HepG2 (cell line): ENCODE measurements at regions of chr17 and their contacts with region 1.

Region 1: GRCh38 chr17:11997147-11997846 is at the start of gene ZNF18:
- DNase-seq: peak; percentile 82
- ATAC-seq: peak; percentile 98
- H3K4me3 ChIP-seq: peak within 1 kb of the TSS; percentile 80 to 98 (median 80)
- H3K27ac ChIP-seq: peak within 1 kb of the TSS; percentile 80
- H3K4me1 ChIP-seq: peaks cover 15% of the 10 kb centered on the region
- H3K27me3 ChIP-seq: peaks cover 0 to 3% of the 10 kb centered on the region in 2 experiments; a peak in 1 of 5 replicates
- CTCF ChIP-seq: peak; percentile 26
- EP300 ChIP-seq: no peak
- POLR2A ChIP-seq: peak; percentile 97 to 98
- RAD21 ChIP-seq: peak; percentile 35; the same call in 1 of the 2 replicates
- total RNA-seq, gene ZNF18: 5.4 and 6.7 TPM in 2 replicates

Region 2: GRCh38 chr17:11671126-11671525 is 326.2 kb before region 1 on chr17:
- CTCF ChIA-PET with region 1: no interaction called
- POLR2A ChIA-PET with region 1: no interaction called
- in situ Hi-C with region 1: no loop called
- intact Hi-C with region 1: no loop called
- DNase-seq: no peak
- ATAC-seq: no peak
- H3K4me3 ChIP-seq: no peak overlapping the region
- H3K27ac ChIP-seq: no peak overlapping the region
- H3K4me1 ChIP-seq: no peaks in the 10 kb centered on the region
- H3K27me3 ChIP-seq: no peaks in the 10 kb centered on the region
- CTCF ChIP-seq: no peak
- EP300 ChIP-seq: no peak
- POLR2A ChIP-seq: no peak
- RAD21 ChIP-seq: no peak

Region 3: GRCh38 chr17:11885051-11885450 is 112.2 kb before region 1 on chr17:
- CTCF ChIA-PET with region 1: no interaction called
- POLR2A ChIA-PET with region 1: no interaction called
- in situ Hi-C with region 1: no loop called
- intact Hi-C with region 1: no loop called
- DNase-seq: no peak
- ATAC-seq: no peak
- H3K4me3 ChIP-seq: no peak overlapping the region
- H3K27ac ChIP-seq: no peak overlapping the region
- H3K4me1 ChIP-seq: no peaks in the 10 kb centered on the region
- H3K27me3 ChIP-seq: no peaks in the 10 kb centered on the region
- CTCF ChIP-seq: no peak
- EP300 ChIP-seq: no peak
- POLR2A ChIP-seq: no peak
- RAD21 ChIP-seq: no peak

Region 4: DNA sequence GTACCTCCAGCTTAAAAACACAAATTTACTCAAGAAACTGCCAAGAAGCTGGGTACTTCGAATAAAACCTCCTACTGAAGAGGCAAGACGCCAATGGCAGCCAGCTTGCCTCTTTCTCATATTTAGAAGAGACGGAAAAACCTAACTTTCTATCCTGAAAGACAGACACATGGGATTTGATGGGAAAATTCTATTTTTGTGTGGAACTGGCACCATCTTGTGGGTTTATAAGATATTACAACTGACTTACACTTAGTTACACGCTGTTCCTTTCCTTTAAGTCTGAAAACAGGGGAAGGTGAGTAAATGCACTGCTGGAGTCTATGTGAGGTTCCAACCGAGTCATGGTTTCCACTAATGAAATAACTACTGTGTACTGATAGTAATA is 10.4 kb before region 1 on chr17:
- CTCF ChIA-PET with region 1: no interaction called
- POLR2A ChIA-PET with region 1: interaction called, 13 read pairs
- in situ Hi-C with region 1: no loop called
- intact Hi-C with region 1: no loop called
- DNase-seq: peak; percentile 37
- ATAC-seq: peak; percentile 72
- H3K4me3 ChIP-seq: peak overlapping the region in 2 of 3 experiments; percentile 19 to 38; a peak in 2 of 6 replicates
- H3K27ac ChIP-seq: peak overlapping the region; percentile 64
- H3K4me1 ChIP-seq: peaks cover 35% of the 10 kb centered on the region
- H3K27me3 ChIP-seq: no peaks in the 10 kb centered on the region
- CTCF ChIP-seq: peak; percentile 67
- EP300 ChIP-seq: no peak
- POLR2A ChIP-seq: no peak
- RAD21 ChIP-seq: no peak

Region 5: DNA sequence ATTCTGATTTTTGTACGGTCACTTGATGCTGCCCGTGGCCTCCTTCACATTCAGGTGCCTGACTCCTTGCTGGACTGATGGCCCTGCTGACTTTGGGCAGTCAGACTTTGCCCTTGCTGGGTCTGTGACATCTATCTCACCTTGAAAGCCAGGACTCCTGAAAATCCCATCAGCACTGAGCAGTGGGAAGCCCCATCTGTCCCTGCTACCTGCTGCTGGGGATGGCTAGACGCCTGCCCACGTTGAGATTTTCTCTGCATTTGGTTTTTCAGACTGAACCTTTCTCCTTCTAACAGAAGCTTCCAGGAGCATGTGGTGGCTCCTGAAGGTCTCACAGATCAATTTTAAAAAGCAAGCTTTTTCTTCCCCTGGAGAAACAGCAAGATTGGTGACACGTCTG is 10.2 kb after region 1 on chr17:
- CTCF ChIA-PET with region 1: no interaction called
- POLR2A ChIA-PET with region 1: interaction called, 25 read pairs
- in situ Hi-C with region 1: no loop called
- intact Hi-C with region 1: no loop called
- DNase-seq: no peak
- ATAC-seq: no peak
- H3K4me3 ChIP-seq: no peak overlapping the region
- H3K27ac ChIP-seq: no peak overlapping the region
- H3K4me1 ChIP-seq: no peaks in the 10 kb centered on the region
- H3K27me3 ChIP-seq: peaks cover 0 to 1% of the 10 kb centered on the region in 2 experiments; a peak in 4 of 5 replicates
- CTCF ChIP-seq: no peak
- EP300 ChIP-seq: no peak
- POLR2A ChIP-seq: no peak
- RAD21 ChIP-seq: no peak

Region 6: GRCh38 chr17:12020642-12021622 is 23.6 kb after region 1 on chr17 and contains the start of gene MAP2K4:
- CTCF ChIA-PET with region 1: no interaction called
- POLR2A ChIA-PET with region 1: interaction called, 112 read pairs
- in situ Hi-C with region 1: no loop called
- intact Hi-C with region 1: no loop called
- DNase-seq: peak; percentile 69
- ATAC-seq: peak; percentile 98
- H3K4me3 ChIP-seq: peak within 1 kb of the TSS; percentile 66 to 84 (median 73)
- H3K27ac ChIP-seq: peak within 1 kb of the TSS; percentile 85
- H3K4me1 ChIP-seq: peaks cover 50% of the 10 kb centered on the region
- H3K27me3 ChIP-seq: peaks cover 2 to 12% of the 10 kb centered on the region in 2 experiments; a peak in 4 of 5 replicates
- CTCF ChIP-seq: no peak
- EP300 ChIP-seq: no peak; a peak in 1 of 4 replicates
- POLR2A ChIP-seq: peak; percentile 83 to 85
- RAD21 ChIP-seq: peak; percentile 56; the same call in 1 of the 2 replicates
- total RNA-seq, gene MAP2K4: 35.6 and 53.7 TPM in 2 replicates

Region 7: DNA sequence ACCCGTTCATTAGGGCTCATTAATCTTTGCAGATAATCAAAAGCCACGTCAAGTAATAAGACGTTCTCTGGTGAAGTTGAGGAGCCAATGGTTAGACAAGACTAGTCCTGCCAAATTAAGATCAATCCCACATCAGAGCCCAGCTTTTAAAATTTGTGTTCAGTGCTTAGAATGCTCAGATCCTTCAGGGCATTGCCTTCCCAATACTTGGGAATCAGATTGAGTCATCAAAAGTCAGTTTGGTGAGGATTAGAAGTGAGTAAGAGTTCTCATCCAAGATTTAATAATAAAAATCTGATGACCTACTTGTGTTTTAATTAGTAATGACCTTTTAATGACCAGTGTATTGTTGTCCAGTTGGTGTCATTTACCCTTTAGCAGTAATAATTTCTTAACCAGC is 43.2 kb after region 1 on chr17:
- CTCF ChIA-PET with region 1: no interaction called
- POLR2A ChIA-PET with region 1: no interaction called
- in situ Hi-C with region 1: no loop called
- intact Hi-C with region 1: no loop called
- DNase-seq: no peak
- ATAC-seq: no peak
- H3K4me3 ChIP-seq: no peak overlapping the region
- H3K27ac ChIP-seq: no peak overlapping the region
- H3K4me1 ChIP-seq: peaks cover 23% of the 10 kb centered on the region
- H3K27me3 ChIP-seq: no peaks in the 10 kb centered on the region
- CTCF ChIP-seq: no peak
- EP300 ChIP-seq: no peak
- POLR2A ChIP-seq: no peak
- RAD21 ChIP-seq: no peak

Region 8: DNA sequence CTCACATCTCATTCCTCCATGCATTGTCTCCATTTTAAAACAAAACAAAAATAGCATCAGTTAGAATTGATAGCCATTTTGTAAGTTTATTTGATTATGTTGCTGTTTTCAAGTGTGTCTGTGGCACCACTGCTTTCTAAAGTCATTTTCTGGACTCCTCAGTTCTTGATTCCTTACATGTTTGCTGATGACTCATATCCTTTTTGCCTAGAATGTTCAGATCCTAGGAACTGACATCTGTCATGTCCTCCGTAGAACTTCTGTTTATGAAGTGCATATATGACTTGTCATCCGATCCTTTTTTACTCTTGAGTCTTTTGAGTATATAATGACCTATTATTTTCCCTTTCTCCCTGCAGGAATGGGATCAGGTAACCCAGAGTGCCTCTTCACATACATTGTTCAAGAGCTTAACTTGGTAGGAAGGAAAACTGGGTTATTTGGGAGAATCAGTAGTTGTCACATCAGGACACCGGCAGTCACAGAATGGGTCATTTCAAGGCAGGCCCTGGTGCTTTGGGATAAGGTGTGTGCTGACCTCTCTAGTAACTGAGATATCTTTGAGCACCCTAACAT is 92.6 kb after region 1 on chr17:
- CTCF ChIA-PET with region 1: no interaction called
- POLR2A ChIA-PET with region 1: interaction called, 8 read pairs
- in situ Hi-C with region 1: no loop called
- intact Hi-C with region 1: loop called (anchors 5 kb)
- DNase-seq: peak; percentile 69
- ATAC-seq: no peak
- H3K4me3 ChIP-seq: no peak overlapping the region
- H3K27ac ChIP-seq: no peak overlapping the region
- H3K4me1 ChIP-seq: peaks cover 53% of the 10 kb centered on the region
- H3K27me3 ChIP-seq: no peaks in the 10 kb centered on the region
- CTCF ChIP-seq: no peak
- EP300 ChIP-seq: no peak
- POLR2A ChIP-seq: no peak
- RAD21 ChIP-seq: no peak

Region 9: DNA sequence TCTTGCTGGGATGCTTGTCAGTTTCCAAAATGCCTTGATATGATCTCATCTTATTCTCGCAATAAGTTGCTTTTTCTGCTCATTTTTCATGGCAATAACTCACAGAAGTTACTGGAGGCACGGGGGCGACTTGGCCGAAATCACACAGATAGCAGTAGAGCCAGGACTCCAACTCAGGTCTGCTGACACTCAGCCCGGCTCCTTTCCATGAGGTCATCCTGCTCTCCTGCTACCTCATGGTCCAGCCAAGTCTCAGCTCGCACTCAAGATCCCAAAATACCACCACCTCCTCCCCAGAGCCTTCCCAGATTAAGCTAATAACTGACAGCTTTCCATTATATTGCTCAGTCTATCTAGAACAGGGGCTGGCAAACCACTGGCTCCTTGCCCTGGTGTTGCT is 292.9 kb after region 1 on chr17:
- CTCF ChIA-PET with region 1: no interaction called
- POLR2A ChIA-PET with region 1: no interaction called
- in situ Hi-C with region 1: no loop called
- intact Hi-C with region 1: no loop called
- DNase-seq: no peak
- ATAC-seq: no peak
- H3K4me3 ChIP-seq: no peak overlapping the region
- H3K27ac ChIP-seq: no peak overlapping the region
- H3K4me1 ChIP-seq: no peaks in the 10 kb centered on the region
- H3K27me3 ChIP-seq: no peaks in the 10 kb centered on the region
- CTCF ChIP-seq: no peak
- EP300 ChIP-seq: no peak
- POLR2A ChIP-seq: no peak
- RAD21 ChIP-seq: no peak